ENCODE measurements at regions of chr5 and their contacts with region 1.

Region 1: GRCh38 chr5:150560401-150561193 is 52.7 kb downstream of the NDST1 start:
- DNase-seq: peak; percentile 72 to 82 (median 78)
- ATAC-seq: peak; percentile 87 to 89
- H3K4me3 ChIP-seq: no peak overlapping the region
- H3K27ac ChIP-seq: no peak overlapping the region
- H3K4me1 ChIP-seq: no peaks in the 10 kb centered on the region
- H3K27me3 ChIP-seq: no peaks in the 10 kb centered on the region

Region 2: DNA sequence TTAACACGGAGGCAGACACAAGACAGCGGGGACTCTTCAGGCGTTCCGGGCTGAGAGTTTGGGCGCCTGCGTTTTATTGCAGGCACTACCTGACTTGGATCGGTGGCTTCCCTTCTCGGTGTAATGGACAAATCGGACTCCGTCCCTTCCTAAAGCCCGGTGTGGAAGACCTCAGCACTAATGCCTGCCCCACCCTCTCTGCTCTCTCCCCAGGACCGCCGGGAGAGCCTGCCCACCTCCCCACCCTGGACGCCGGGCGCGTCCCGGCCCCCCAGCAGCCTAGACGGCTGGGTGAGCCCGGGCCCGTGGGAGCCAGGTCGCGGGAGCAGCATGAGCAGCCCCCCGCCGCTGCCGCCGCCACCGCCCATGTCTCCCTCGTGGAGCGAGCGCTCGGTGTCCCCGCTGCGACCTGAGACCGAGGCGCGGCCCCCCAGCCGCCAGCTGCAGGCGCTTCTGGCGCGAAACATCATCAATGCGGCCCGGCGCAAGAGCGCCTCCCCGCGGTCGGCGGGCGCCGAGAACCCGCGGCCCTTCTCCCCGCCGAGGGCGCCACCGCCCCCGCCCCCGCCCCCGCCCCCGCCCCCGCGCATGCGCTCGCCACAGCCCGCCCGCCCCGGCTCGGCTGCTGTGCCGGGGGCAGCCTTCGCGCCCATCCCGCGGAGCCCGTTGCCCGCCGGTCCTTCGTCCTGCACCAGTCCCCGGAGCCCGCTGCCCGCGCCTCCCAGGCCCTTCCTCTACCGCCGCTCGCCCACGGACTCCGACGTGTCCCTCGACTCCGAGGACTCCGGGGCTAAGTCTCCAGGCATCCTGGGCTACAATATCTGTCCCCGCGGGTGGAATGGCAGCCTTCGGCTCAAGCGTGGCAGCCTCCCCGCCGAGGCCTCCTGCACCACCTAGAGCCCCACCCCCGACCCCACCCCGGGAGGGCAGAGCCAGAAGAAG is 95.9 kb after region 1 on chr5:
- intact Hi-C with region 1: loop called (anchors 5 kb)
- DNase-seq: peak; percentile 82 to 93 (median 92)
- ATAC-seq: peak; percentile 50 to 60
- H3K4me3 ChIP-seq: peak overlapping the region; percentile 40
- H3K27ac ChIP-seq: peak overlapping the region; percentile 83
- H3K4me1 ChIP-seq: peaks cover 25% of the 10 kb centered on the region
- H3K27me3 ChIP-seq: no peaks in the 10 kb centered on the region

Region 3: DNA sequence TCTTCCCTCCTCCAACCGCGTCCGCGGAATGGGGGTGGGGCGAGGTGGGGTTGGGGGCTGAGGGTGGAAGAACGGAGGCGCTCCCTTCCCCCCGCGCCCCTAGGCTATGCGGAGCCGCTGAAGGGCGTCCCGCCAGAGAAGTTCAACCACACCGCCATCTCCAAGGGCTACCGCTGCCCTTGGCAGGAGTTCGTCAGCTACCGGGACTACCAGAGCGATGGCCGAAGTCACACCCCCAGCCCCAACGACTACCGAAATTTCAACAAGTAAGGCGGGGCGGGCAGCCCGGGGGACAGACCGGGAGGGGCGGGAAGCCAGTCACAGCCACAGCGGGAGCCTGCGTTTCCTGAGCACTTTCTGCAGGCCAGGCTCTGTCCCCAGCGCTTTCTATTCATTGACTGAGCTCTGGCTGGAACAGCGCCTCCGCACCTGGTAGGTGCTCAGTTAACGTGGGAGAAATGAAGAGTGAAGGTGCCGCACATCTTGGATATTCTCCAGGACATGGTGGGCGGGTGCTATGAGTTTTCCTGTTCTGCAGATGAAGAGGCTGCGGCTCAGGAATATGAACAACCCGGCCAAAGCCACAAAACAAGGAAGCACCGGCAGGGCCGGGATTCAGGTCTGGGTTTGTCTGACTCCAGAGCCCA is 111.8 kb after region 1 on chr5:
- intact Hi-C with region 1: loop called in 1 of 4 experiments (anchors 5 kb)
- DNase-seq: peak; percentile 69 to 87 (median 85)
- ATAC-seq: peak; percentile 44 to 60
- H3K4me3 ChIP-seq: peak overlapping the region; percentile 51
- H3K27ac ChIP-seq: no peak overlapping the region
- H3K4me1 ChIP-seq: peaks cover 10% of the 10 kb centered on the region
- H3K27me3 ChIP-seq: no peaks in the 10 kb centered on the region

Region 4: GRCh38 chr5:150700594-150701293 is 140.1 kb after region 1 on chr5 and contains the start of gene RBM22:
- intact Hi-C with region 1: loop called in 2 of 4 experiments (anchors 2 to 5 kb)
- DNase-seq: peak; percentile 94 to 98 (median 97)
- ATAC-seq: peak; percentile 99
- H3K4me3 ChIP-seq: peak within 1 kb of the TSS; percentile 85
- H3K27ac ChIP-seq: peak within 1 kb of the TSS; percentile 99
- H3K4me1 ChIP-seq: no peaks in the 10 kb centered on the region
- H3K27me3 ChIP-seq: no peaks in the 10 kb centered on the region
- total RNA-seq, gene RBM22: 25.1 to 30.8 (median 26.4) TPM

Region 5: DNA sequence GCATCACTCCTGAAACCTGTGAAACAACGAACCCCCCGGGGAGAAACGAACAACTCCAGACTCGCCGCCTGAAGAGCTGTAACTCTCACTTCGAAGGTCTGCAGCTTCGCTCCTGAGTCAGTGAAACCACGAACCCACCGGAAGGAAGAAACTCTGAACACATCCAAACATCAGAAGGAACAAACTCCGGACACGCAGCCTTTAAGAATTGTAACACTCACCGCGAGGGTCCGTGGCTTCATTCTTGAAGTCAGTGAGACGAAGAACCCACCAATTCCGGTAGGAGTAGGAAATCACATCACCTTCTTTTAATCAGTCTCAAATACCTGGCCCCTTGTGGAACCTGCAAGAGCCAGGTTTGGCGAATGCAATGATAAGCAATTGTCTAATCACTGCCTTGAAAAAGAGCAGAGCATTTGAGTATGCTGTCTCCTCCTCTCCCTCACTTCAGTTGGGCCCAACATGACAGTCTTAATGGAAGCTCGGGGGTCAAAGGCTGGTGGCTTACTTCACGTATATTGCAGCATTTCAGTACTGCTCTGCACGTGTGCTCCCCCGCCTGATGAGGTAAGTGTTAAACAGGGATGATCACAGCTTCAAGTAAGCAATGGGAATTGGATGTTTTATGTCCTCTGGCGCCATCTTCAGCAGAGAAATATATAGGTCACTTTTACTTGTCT is 286.2 kb after region 1 on chr5:
- intact Hi-C with region 1: loop called in 3 of 4 experiments (anchors 5 kb)
- DNase-seq: peak; percentile 35 to 51 (median 48)
- ATAC-seq: peak; percentile 76 to 90
- H3K4me3 ChIP-seq: no peak overlapping the region
- H3K27ac ChIP-seq: no peak overlapping the region
- H3K4me1 ChIP-seq: no peaks in the 10 kb centered on the region
- H3K27me3 ChIP-seq: no peaks in the 10 kb centered on the region